Activated CD4-positive, alpha-beta T cell treated with anti-CD3 and anti-CD28 coated beads for 36 hours (primary cell): ENCODE measurements at regions of chr5 and their contacts with region 1.

Region 1: DNA sequence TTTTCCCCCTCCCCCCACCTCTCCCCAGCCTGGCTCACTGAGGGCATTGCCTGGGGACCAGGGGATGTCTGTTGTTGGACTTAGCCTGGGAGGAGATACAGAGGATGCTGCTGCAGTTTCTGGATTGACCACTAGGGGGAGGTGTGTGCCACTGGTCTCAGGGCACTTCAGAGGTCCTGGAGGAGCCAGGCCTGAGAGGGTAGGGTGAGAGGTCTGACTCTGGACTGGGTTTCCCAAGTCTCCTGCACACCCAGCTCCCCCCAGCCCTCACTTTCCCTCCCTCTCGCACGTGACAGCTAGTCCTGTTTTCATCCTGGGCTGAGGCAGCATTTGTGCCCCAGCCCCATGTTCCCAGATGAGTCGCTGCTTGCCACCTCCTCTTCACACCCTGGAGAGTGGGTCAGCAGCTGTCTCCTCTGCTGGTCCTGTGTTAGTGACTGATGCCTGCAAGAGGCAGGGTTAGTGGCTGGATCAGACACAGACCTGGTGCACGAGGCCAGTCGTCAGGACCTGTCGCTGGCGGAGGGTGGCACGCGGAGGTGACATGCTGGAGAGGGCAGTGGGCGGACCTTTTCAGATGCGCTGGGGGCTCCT is 4.4 kb downstream of the IL3 start:
- DNase-seq: peak; percentile 90
- ATAC-seq: peak; percentile 75
- H3K4me3 Mint-ChIP-seq: no peak overlapping the region
- H3K27ac Mint-ChIP-seq: no peak overlapping the region
- H3K4me1 Mint-ChIP-seq: peaks cover 19% of the 10 kb centered on the region
- H3K27me3 Mint-ChIP-seq: no peaks in the 10 kb centered on the region

Region 2: DNA sequence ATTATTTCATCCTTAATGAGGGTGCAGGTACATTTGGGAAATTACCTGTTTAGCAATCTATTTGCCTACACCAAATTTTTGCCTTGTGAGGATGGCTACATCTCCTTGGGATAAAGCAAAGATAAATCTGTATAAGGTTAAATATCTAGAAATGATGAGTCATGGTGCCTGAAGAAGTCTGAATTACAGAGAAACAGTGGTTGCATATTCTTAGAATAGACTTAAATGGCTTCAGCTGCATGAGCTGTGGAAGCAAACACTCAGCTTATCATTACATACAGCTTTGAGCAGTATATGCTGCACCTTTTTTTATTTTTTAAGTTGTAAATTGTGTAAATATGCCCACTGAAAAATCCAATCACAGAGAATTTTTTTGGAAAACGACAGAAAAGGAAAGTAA is 583.3 kb before region 1 on chr5:
- CTCF ChIA-PET with region 1: no interaction called
- POLR2A ChIA-PET with region 1: no interaction called
- intact Hi-C with region 1: no loop called
- DNase-seq: no peak
- ATAC-seq: peak; percentile 28
- H3K4me3 Mint-ChIP-seq: no peak overlapping the region
- H3K27ac Mint-ChIP-seq: peak overlapping the region; percentile 73
- H3K4me1 Mint-ChIP-seq: peaks cover 48% of the 10 kb centered on the region
- H3K27me3 Mint-ChIP-seq: no peaks in the 10 kb centered on the region

Region 3: DNA sequence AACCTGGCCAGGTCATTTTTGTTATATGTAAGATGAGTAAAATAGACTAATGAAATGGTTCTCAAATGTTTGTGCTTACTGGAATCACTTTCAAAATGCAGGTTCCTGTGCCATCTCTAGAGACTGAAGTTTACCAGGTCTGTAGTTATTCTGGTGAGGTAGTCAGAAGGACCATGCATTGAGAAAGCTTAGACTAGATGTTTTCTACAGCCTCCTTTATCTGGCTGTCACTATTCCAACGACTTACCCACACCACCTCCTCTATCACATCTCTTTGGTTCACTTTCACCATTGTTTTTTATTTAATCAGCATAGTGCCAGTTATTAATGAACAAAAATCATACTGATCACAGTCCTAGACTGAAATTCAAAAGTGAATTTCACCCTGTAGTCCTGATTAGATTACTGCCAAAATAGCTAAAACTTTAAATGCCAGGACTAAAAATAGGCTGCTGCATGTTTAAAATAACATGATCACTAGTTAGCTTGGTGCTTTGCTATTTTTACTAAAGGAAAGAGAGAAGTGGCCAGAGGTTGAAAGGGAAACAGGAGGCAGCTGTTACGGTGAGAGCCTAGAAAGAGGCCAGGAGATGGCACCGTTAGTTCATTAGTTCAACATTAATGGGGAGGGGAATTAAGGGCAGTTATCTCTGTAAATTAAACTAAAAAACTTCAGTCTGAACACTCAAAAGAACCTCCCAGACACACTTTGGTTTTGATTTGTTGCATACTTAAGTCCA is 254.2 kb before region 1 on chr5:
- CTCF ChIA-PET with region 1: interaction called, 3 read pairs
- POLR2A ChIA-PET with region 1: no interaction called
- intact Hi-C with region 1: loop called (anchors 1 to 2 kb)
- DNase-seq: no peak
- ATAC-seq: no peak
- H3K4me3 Mint-ChIP-seq: no peak overlapping the region
- H3K27ac Mint-ChIP-seq: no peak overlapping the region
- H3K4me1 Mint-ChIP-seq: no peaks in the 10 kb centered on the region
- H3K27me3 Mint-ChIP-seq: peaks cover 3% of the 10 kb centered on the region

Region 4: GRCh38 chr5:131974956-131975726 is 89.7 kb before region 1 on chr5:
- CTCF ChIA-PET with region 1: no interaction called
- POLR2A ChIA-PET with region 1: no interaction called
- intact Hi-C with region 1: no loop called
- DNase-seq: peak; percentile 28
- ATAC-seq: peak; percentile 59
- H3K4me3 Mint-ChIP-seq: peak overlapping the region; percentile 40
- H3K27ac Mint-ChIP-seq: peak overlapping the region; percentile 64
- H3K4me1 Mint-ChIP-seq: peaks cover 40% of the 10 kb centered on the region
- H3K27me3 Mint-ChIP-seq: no peaks in the 10 kb centered on the region

Region 5: GRCh38 chr5:132134384-132134783 is 69.5 kb after region 1 on chr5:
- CTCF ChIA-PET with region 1: interaction called, 4 read pairs
- POLR2A ChIA-PET with region 1: no interaction called
- intact Hi-C with region 1: loop called (anchors 1 to 2 kb)
- DNase-seq: no peak
- ATAC-seq: peak; percentile 42
- H3K4me3 Mint-ChIP-seq: no peak overlapping the region
- H3K27ac Mint-ChIP-seq: no peak overlapping the region
- H3K4me1 Mint-ChIP-seq: peaks cover 8% of the 10 kb centered on the region
- H3K27me3 Mint-ChIP-seq: peaks cover 17% of the 10 kb centered on the region

Region 6: DNA sequence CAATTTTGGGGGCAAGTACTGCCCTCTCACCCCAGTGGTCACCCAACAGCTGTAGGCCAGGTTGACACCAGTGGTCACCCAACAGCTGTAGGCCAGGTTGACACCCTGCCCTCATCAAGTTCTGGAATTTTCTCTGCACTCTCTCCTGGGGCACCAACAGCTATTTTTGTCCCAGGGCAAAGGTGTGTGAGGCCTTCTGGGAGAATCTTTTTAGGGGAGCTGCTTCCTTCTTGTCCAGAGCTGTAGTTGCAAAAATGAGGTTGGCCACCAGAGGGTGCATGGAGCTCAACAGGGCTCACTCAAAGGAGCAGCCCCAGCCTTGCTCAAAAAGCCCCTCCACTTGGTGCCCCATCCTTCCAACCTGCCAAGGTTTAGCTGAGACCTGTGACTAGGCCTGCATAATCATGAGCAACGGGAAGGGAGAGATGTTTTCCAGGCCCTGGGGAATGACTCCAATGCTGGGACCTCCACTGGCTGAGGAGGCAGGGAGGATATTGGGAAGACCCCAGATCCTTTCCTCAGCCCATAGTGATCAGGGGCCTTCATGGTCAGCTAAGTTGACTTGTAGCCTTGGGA is 173.4 kb after region 1 on chr5:
- CTCF ChIA-PET with region 1: interaction called, 11 read pairs
- POLR2A ChIA-PET with region 1: no interaction called
- intact Hi-C with region 1: loop called (anchors 1 to 2 kb)
- DNase-seq: peak; percentile 89
- ATAC-seq: peak; percentile 95
- H3K4me3 Mint-ChIP-seq: no peak overlapping the region
- H3K27ac Mint-ChIP-seq: no peak overlapping the region
- H3K4me1 Mint-ChIP-seq: no peaks in the 10 kb centered on the region
- H3K27me3 Mint-ChIP-seq: peaks cover 6% of the 10 kb centered on the region

Region 7: GRCh38 chr5:132386644-132387286 is 321.9 kb after region 1 on chr5:
- CTCF ChIA-PET with region 1: no interaction called
- POLR2A ChIA-PET with region 1: no interaction called
- intact Hi-C with region 1: loop called in 1 of 2 experiments (anchors 1 kb)
- DNase-seq: peak; percentile 88
- ATAC-seq: peak; percentile 87
- H3K4me3 Mint-ChIP-seq: no peak overlapping the region
- H3K27ac Mint-ChIP-seq: peak overlapping the region; percentile 29
- H3K4me1 Mint-ChIP-seq: peaks cover 40% of the 10 kb centered on the region
- H3K27me3 Mint-ChIP-seq: no peaks in the 10 kb centered on the region

Region 8: DNA sequence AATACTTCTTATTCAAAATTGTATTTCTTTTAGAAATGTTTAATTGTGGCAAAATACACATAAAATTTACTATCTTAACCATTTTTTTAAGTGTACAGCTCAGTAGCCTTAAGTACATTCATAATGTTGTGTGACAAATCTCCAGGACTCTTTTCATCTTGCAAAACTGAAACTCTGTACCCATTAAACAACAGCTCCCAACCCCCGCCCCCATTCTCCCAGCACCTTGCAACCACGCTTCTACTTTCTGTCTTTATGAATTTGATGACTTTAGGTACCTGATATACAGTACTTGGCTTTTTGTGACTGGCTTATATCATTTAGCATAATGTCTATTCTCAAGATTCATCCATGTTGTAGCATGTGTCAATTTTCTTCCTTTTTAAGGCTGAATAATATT is 481.3 kb after region 1 on chr5:
- CTCF ChIA-PET with region 1: no interaction called
- POLR2A ChIA-PET with region 1: no interaction called
- intact Hi-C with region 1: no loop called
- DNase-seq: peak; percentile 85
- ATAC-seq: peak; percentile 96
- H3K4me3 Mint-ChIP-seq: no peak overlapping the region
- H3K27ac Mint-ChIP-seq: no peak overlapping the region
- H3K4me1 Mint-ChIP-seq: peaks cover 18% of the 10 kb centered on the region
- H3K27me3 Mint-ChIP-seq: no peaks in the 10 kb centered on the region